A549 (cell line): ENCODE measurements at regions of chr1 and their contacts with region 1.

Region 1: GRCh38 chr1:235415008-235415904 is 48.0 kb downstream of the TBCE start:
- DNase-seq: peak; percentile 81 to 90
- ATAC-seq: peak; percentile 81 to 84
- H3K4me3 ChIP-seq: no peak overlapping the region
- H3K27ac ChIP-seq: peak overlapping the region; percentile 31 to 61; a peak in 5 of 6 replicates
- H3K4me1 ChIP-seq: peaks cover 38% of the 10 kb centered on the region
- CTCF ChIP-seq: peak; percentile 85
- EP300 ChIP-seq: no peak
- POLR2A ChIP-seq: no peak
- RAD21 ChIP-seq: peak; percentile 78 to 82

Region 2: GRCh38 chr1:235105051-235106043 is 309.9 kb before region 1 on chr1:
- CTCF ChIA-PET with region 1: interaction called, 19 read pairs
- POLR2A ChIA-PET with region 1: no interaction called
- DNase-seq: no peak
- ATAC-seq: peak; percentile 15 to 22; a peak in 4 of 6 replicates
- H3K4me3 ChIP-seq: no peak overlapping the region
- H3K27ac ChIP-seq: no peak overlapping the region; a peak in 1 of 6 replicates
- H3K4me1 ChIP-seq: peaks cover 9% of the 10 kb centered on the region; the same call in 2 of the 3 replicates
- CTCF ChIP-seq: no peak
- EP300 ChIP-seq: no peak
- POLR2A ChIP-seq: no peak
- RAD21 ChIP-seq: no peak

Region 3: DNA sequence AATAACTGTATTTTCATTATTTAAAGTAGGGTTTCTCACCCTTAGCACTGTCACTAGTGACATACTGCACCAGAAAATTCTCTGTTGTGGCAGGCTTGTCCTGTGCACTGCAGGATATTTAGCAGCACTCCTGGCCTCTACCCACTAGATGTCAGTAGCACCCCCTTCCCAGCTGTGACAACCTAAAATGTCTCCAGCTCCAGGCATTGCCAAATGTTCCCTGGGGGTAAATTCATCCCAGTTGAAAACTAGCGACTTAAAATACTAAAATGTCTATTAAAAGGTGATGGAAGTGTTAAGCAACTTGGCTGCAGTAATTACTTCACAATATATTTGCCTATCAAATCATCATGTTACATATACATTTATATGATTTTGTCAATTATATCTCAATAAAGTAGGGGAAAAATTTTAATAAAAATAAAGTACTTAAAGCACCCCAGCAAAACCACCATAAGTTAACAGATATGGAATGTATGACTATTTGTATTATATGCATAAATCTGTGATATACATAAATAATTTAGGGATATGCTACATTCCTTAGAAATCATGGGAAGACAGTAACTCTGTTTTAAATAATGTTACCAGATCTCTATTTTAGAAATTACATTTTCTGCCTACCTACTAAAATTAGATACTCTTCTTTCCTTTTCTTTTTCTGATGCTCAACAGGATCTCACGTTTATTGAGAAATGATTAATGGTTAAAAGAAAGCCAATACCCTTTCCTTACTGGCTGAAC is 161.9 kb before region 1 on chr1:
- CTCF ChIA-PET with region 1: interaction called, 42 read pairs
- POLR2A ChIA-PET with region 1: no interaction called
- DNase-seq: peak; percentile 40 to 73
- ATAC-seq: peak; percentile 97 to 100
- H3K4me3 ChIP-seq: no peak overlapping the region
- H3K27ac ChIP-seq: no peak overlapping the region
- H3K4me1 ChIP-seq: peaks cover 6% of the 10 kb centered on the region; the same call in 1 of the 3 replicates
- CTCF ChIP-seq: peak; percentile 94
- EP300 ChIP-seq: no peak
- POLR2A ChIP-seq: no peak
- RAD21 ChIP-seq: peak; percentile 88 to 89

Region 4: GRCh38 chr1:235268379-235269125 is 146.7 kb before region 1 on chr1:
- CTCF ChIA-PET with region 1: interaction called, 11 read pairs
- POLR2A ChIA-PET with region 1: no interaction called
- DNase-seq: no peak
- ATAC-seq: no peak
- H3K4me3 ChIP-seq: no peak overlapping the region
- H3K27ac ChIP-seq: no peak overlapping the region
- H3K4me1 ChIP-seq: peaks cover 20% of the 10 kb centered on the region; the same call in 2 of the 3 replicates
- CTCF ChIP-seq: no peak
- EP300 ChIP-seq: no peak
- POLR2A ChIP-seq: no peak
- RAD21 ChIP-seq: no peak

Region 5: DNA sequence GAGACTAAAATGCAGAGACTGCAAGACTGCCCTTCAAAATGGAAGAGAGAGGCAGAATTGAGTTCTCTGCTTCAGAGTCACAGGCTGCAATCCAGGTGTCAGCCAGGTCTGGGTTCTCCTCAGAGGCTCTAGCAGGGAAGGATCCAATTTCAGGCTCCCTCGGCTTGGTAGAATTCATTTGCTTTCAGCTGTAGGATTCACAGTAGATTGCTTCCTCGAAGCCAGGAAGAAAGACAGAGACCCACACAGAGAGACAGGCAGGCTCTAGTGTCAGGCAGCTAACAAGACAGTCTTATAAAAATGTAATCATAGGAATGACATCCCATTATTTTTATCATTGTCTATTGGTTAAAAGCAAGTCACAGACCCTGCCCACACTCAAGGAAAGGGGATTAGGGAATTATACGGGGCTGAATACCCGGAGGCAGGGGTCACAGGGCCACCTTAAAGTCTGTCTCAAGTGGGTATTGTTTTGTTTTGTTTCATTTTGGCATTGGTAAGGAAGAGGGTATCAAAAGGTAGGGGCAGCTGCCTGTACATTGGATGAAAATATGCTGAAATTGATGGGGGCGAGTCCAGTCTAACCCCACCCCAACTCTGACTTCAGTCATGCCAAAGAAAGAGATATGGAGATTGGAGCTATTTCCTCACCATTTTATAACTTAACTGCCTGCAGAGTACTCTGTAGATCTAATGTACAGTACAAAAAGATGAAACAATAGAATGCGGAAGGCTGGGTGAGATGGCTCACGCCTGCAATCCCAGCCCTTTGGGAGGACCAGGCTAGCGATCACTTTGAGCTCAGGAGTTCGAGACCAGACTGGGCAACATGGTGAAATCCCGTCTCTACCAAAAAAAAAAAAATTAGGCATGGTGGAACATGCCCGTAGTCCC is 57.5 kb before region 1 on chr1:
- CTCF ChIA-PET with region 1: interaction called, 13 read pairs
- POLR2A ChIA-PET with region 1: no interaction called
- DNase-seq: no peak
- ATAC-seq: peak; percentile 34 to 47; a peak in 4 of 6 replicates
- H3K4me3 ChIP-seq: no peak overlapping the region
- H3K27ac ChIP-seq: no peak overlapping the region
- H3K4me1 ChIP-seq: no peaks in the 10 kb centered on the region
- CTCF ChIP-seq: no peak
- EP300 ChIP-seq: no peak
- POLR2A ChIP-seq: no peak
- RAD21 ChIP-seq: no peak

Region 6: DNA sequence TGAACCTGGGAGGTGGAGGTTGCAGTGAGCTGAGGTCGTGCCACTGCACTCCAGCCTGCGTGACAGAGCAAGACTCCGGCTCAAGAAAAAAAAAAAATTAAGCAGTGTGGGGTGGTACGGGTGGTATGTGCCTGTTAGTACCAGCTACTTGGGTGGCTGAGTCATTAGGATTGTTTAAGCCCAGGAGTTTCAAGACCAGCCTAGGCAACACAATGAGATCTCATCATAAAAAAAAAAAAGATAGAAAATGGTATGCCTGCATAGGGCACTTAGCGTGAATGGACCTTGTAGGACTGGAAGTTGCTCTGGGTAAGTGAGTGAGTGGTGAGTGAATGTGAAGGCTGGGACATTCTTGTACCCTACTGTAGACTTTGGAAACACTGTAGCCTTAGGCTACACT is 11.1 kb before region 1 on chr1:
- CTCF ChIA-PET with region 1: interaction called, 39 read pairs
- POLR2A ChIA-PET with region 1: no interaction called
- DNase-seq: peak in 1 of 2 experiments; percentile 90
- ATAC-seq: peak; percentile 83 to 90
- H3K4me3 ChIP-seq: no peak overlapping the region
- H3K27ac ChIP-seq: peak overlapping the region; percentile 83 to 85
- H3K4me1 ChIP-seq: peaks cover 90% of the 10 kb centered on the region
- CTCF ChIP-seq: no peak
- EP300 ChIP-seq: peak in 1 of 2 experiments; percentile 20; a peak in 1 of 5 replicates
- POLR2A ChIP-seq: no peak
- RAD21 ChIP-seq: no peak

Region 7: DNA sequence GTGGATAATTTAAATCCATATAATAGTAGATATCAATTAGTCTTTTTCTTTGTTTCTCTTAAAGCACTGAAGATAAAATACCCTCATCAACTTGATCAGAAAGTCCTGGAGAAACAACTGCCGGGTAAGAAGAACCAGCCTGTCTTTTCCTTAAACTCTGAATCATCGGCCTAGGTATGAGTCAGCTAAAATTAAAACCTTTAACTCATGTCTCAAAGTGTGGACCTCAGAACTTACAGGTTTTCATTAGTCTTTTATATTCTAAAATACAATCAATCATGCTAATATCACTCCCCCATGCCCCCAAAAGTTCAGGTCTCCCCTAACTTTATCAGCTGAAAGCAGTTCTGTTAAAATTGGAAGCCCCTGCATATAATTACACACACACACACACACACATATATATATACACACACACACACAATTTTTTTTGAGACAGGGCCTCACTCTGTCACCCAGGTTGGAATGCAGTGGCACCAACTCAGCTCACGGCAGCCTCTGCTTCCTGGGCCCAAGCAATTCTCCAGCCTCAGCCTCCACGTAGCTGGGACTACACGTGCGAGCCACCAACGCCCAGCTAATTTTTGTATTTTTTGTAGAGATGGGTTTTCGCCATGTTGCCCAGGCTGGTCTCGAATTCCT is 27.7 kb after region 1 on chr1:
- CTCF ChIA-PET with region 1: interaction called, 17 read pairs
- POLR2A ChIA-PET with region 1: no interaction called
- DNase-seq: peak; percentile 43 to 62
- ATAC-seq: peak; percentile 67 to 70; a peak in 4 of 6 replicates
- H3K4me3 ChIP-seq: no peak overlapping the region
- H3K27ac ChIP-seq: peak overlapping the region; percentile 85 to 91
- H3K4me1 ChIP-seq: peaks cover 28% of the 10 kb centered on the region
- CTCF ChIP-seq: no peak
- EP300 ChIP-seq: no peak
- POLR2A ChIP-seq: no peak
- RAD21 ChIP-seq: no peak